BJ (cell line): ENCODE measurements at regions of chr11 and their contacts with region 1.

Region 1: DNA sequence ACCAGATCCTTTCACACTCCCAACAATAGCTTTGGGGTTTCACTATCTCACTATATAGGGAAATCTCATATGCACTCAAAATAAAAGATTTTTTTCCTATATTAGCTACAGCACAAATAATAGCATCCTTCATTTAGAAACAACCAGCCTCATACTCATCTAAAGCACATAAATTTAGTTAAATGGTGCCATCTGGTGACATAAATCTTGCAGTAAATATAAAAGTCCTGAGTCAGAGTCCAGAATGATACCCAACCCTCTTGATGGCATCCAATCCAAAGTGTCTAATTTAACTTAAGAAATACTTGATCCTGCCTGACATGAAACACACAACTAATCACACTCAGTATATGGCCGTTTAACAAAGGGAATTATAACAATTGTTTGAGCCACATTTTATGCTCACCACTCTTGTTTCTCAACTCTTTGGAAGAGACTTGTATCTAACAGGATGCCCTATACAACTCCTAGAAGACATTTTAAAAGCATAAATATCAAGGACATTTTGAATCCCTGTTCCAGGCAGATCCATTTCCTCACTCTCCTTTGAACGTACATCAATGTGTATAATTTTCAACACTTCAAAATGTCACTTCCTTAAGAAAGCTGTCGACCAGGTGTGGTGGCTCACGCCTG is 36.2 kb downstream of the DLG2 start:
- DNase-seq: peak; percentile 8
- H3K4me3 ChIP-seq: no peak overlapping the region
- H3K27me3 ChIP-seq: peaks cover 1% of the 10 kb centered on the region; the same call in 1 of the 2 replicates
- CTCF ChIP-seq: no peak

Region 2: GRCh38 chr11:84558085-84558905 is 1032.7 kb before region 1 on chr11:
- CTCF ChIA-PET with region 1: interaction called, 12 read pairs
- POLR2A ChIA-PET with region 1: no interaction called
- DNase-seq: peak; percentile 2
- H3K4me3 ChIP-seq: no peak overlapping the region
- H3K27me3 ChIP-seq: no peaks in the 10 kb centered on the region
- CTCF ChIP-seq: peak; percentile 83

Region 3: GRCh38 chr11:84800755-84801346 is 790.1 kb before region 1 on chr11:
- CTCF ChIA-PET with region 1: interaction called, 16 read pairs
- POLR2A ChIA-PET with region 1: no interaction called
- DNase-seq: no peak
- H3K4me3 ChIP-seq: no peak overlapping the region
- H3K27me3 ChIP-seq: no peaks in the 10 kb centered on the region
- CTCF ChIP-seq: peak; percentile 39

Region 4: DNA sequence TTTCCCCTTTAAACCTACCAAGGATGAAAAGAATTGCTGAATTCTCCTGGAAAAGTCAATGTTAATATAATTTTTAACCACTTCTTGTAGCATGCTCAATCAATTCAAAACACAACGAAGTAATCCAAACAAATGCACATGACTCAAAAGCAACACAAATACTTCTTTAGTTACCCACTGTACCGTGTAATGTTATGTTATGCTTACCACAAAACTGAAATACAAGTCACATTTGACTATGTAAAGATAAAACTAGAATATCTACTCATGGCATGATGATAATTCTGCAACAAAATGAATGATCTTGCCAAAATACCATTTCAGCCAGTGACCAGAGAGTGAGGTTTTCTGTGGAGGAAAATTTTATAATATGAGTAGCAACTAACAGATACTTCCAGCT is 550.8 kb before region 1 on chr11:
- CTCF ChIA-PET with region 1: no interaction called
- POLR2A ChIA-PET with region 1: no interaction called
- DNase-seq: no peak
- H3K4me3 ChIP-seq: no peak overlapping the region
- H3K27me3 ChIP-seq: no peaks in the 10 kb centered on the region
- CTCF ChIP-seq: no peak

Region 5: GRCh38 chr11:85634747-85635146 is 43.8 kb after region 1 on chr11:
- CTCF ChIA-PET with region 1: no interaction called
- POLR2A ChIA-PET with region 1: no interaction called
- DNase-seq: no peak
- H3K4me3 ChIP-seq: no peak overlapping the region
- H3K27me3 ChIP-seq: no peaks in the 10 kb centered on the region
- CTCF ChIP-seq: no peak